ENCODE measurements at regions of chr15 and their contacts with region 1.

Region 1: DNA sequence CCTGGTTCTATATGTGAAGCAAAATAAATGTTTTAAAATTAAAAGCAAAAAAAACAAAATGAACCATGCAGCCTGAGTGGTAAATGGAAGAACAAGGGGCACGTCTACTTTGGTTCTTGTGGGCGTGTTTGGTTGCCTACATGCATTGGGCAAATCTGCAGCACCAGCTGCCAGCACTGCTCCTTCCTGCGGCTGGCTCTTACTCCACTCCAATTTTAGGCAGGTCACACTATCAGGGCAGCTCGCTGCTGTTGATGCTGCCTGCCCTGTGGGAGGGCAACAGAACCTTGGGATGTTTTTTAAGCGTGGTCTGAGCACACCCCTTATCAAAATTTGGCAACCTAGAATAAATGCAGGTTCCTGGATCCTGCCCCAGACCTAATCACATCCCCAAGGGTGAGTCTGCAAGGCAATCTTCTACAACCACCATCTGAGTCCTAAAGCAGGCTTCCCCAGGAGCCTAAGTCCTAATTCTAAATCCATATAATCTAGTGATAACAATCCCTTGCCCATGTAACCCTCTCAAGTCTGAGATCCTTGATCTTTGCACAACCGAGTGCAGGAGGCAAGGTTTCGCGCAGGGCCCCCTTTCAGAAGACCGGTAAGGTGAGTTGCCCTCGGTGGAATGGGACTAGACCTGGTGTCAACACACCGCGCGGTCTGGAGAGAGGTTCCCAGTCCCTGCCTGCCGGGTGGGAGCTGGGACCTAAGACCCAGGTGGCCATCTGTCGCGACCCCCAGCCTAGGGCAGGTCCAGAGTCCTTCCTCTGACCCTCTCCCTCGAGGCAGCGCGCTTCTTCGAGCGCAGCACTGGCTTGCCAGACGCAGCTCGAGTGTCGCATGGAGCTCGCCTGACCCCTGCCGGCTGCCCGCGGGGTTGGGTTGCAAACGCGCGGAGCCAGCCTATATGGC is 15.9 kb downstream of the IVD start:
- DNase-seq: peak; percentile 52
- ATAC-seq: peak; percentile 99
- H3K4me3 ChIP-seq: no peak overlapping the region
- H3K27ac ChIP-seq: no peak overlapping the region
- H3K4me1 ChIP-seq: no peaks in the 10 kb centered on the region
- H3K27me3 ChIP-seq: no peaks in the 10 kb centered on the region; the same call in 1 of the 2 replicates
- CTCF ChIP-seq: peak; percentile 93
- POLR2A ChIP-seq: no peak
- RAD21 ChIP-seq: peak; percentile 96

Region 2: DNA sequence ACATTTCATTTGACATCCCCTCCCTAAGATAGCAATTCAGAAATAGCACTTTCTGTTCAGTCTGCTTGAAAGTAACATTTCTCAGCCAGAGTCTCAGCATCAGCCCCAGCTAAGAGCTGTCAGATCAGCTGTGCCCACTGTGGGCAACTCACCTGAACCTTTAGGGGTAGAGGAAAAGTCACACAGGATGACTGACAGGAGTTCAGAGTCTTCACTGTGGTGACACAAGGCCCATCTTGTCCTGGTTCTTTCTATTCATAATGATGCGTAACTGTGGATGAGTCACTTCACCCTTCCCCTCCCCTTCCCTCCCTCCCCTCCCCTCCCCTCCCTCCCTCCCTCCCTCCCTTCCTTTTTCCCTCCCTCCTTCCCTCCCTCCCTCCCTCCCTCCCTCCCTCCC is 1760.8 kb before region 1 on chr15:
- CTCF ChIA-PET with region 1: no interaction called
- POLR2A ChIA-PET with region 1: interaction called, 20 read pairs
- dilution Hi-C with region 1: no loop called
- in situ Hi-C with region 1: no loop called
- intact Hi-C with region 1: no loop called
- DNase-seq: no peak
- ATAC-seq: no peak
- H3K4me3 ChIP-seq: no peak overlapping the region
- H3K27ac ChIP-seq: no peak overlapping the region
- H3K4me1 ChIP-seq: no peaks in the 10 kb centered on the region
- H3K27me3 ChIP-seq: peaks cover 42% of the 10 kb centered on the region
- CTCF ChIP-seq: no peak
- POLR2A ChIP-seq: no peak
- RAD21 ChIP-seq: no peak

Region 3: DNA sequence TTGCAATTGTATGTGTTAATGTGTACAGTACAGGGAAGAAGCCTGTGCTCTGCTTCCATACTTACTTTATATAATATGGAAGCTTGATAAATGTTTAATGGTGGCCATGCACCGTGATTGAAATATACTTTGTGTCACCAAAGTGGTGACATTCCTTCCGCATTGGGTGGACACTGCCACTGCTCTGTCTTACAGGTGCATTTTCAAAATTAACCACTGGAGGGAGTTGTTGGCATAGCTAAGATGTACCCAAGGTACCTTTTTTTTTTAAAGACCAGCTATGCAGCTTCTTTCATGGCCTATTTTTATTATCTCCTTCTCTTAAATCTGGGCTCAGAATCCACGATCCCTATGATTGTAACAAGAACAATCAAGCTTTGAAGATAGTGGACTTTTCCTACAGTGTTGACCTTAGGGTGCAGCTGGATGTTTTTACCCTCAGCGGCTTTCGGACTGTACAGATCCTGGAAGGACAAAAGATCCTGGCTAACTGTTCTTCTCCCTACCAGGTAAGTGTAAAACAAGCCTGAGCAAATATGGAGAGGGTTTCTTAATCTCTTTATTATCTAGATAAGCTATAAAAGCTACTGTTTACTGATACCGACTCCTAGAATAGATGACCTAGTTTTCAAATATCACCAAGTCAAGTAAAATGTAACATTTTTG is 204.2 kb before region 1 on chr15:
- CTCF ChIA-PET with region 1: no interaction called
- POLR2A ChIA-PET with region 1: no interaction called
- dilution Hi-C with region 1: no loop called
- in situ Hi-C with region 1: loop called (anchors 10 kb)
- intact Hi-C with region 1: no loop called
- DNase-seq: peak; percentile 70
- ATAC-seq: peak; percentile 92
- H3K4me3 ChIP-seq: no peak overlapping the region
- H3K27ac ChIP-seq: no peak overlapping the region
- H3K4me1 ChIP-seq: no peaks in the 10 kb centered on the region
- H3K27me3 ChIP-seq: no peaks in the 10 kb centered on the region
- CTCF ChIP-seq: peak; percentile 95
- POLR2A ChIP-seq: no peak
- RAD21 ChIP-seq: peak; percentile 96

Region 4: DNA sequence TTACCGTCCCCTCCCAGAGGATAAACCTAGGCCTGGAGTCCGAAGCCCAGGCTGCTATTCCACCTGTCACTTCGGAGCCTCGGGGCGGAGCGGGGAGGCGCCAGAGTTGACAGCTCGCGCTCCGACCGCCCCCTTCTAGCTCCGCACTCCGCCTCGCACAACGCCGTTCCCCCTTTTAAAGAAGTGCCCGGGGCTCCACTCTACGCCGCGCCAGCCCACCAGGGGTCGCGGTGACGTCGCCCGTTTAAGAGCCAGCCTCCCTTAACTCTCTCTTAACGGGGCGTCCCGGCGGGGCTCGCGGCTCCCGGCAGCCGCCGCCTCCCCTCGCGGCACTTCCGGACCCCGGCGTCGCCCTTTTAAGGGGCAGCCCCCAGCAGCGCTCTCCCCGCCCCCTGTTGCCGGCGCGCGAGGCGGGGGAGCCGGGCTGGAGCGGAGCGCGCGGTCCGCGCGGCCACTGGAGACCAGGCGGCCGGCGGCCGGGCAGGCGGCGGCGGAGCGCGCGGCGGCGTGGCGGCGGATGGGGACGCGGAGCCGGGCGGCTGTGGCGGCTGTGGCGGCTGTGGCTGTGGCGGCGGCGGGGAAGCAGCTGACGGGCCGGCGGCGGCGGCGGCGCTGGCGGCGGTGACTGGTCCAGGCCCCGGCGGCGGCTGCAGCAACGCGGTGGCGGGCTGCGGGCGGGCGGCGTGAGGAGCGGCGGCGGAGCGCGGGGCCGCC is 98.1 kb before region 1 on chr15 and contains the start of gene INAFM2:
- CTCF ChIA-PET with region 1: interaction called, 5 read pairs
- POLR2A ChIA-PET with region 1: no interaction called
- dilution Hi-C with region 1: no loop called
- in situ Hi-C with region 1: loop called (anchors 5 kb)
- intact Hi-C with region 1: loop called (anchors 1 kb)
- DNase-seq: peak; percentile 92
- ATAC-seq: peak; percentile 85
- H3K4me3 ChIP-seq: peak within 1 kb of the TSS; percentile 89
- H3K27ac ChIP-seq: peak within 1 kb of the TSS; percentile 74; the same call in 1 of the 2 replicates
- H3K4me1 ChIP-seq: peaks cover 24% of the 10 kb centered on the region
- H3K27me3 ChIP-seq: peaks cover 2% of the 10 kb centered on the region
- CTCF ChIP-seq: peak; percentile 74
- POLR2A ChIP-seq: peak; percentile 65
- RAD21 ChIP-seq: peak; percentile 51
- total RNA-seq, gene INAFM2: 10.4 and 13.1 TPM in 2 replicates

Region 5: DNA sequence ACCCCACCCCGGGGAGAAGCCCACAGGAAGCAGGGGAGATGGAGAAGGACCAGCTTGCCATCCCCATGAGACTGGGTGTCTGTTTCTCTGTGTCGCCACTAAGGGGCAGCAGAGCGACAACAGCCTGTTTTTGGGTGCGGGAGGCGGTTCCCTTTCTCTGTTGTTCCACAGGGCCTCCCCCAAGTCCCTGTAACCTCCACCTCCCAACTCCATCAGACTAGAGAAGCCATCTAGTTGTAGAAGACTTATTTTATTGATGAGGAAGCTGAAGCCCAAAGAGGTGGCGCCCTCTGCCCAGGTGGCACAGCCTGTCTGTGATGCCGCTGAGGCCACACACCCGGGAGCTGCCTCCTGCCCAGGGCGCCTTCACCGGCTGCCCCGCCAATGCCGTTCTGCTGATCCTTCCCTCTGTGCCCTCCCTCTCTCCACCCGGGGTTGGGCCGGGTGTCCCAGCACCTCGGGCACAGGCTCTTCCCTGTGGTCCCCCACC is 76.8 kb before region 1 on chr15:
- CTCF ChIA-PET with region 1: interaction called, 8 read pairs
- POLR2A ChIA-PET with region 1: no interaction called
- dilution Hi-C with region 1: no loop called
- in situ Hi-C with region 1: no loop called
- intact Hi-C with region 1: loop called (anchors 1 kb)
- DNase-seq: peak; percentile 69
- ATAC-seq: peak; percentile 18
- H3K4me3 ChIP-seq: no peak overlapping the region
- H3K27ac ChIP-seq: peak overlapping the region; percentile 85; the same call in 1 of the 2 replicates
- H3K4me1 ChIP-seq: peaks cover 24% of the 10 kb centered on the region
- H3K27me3 ChIP-seq: no peaks in the 10 kb centered on the region
- CTCF ChIP-seq: peak; percentile 80
- POLR2A ChIP-seq: no peak
- RAD21 ChIP-seq: peak; percentile 71

Region 6: DNA sequence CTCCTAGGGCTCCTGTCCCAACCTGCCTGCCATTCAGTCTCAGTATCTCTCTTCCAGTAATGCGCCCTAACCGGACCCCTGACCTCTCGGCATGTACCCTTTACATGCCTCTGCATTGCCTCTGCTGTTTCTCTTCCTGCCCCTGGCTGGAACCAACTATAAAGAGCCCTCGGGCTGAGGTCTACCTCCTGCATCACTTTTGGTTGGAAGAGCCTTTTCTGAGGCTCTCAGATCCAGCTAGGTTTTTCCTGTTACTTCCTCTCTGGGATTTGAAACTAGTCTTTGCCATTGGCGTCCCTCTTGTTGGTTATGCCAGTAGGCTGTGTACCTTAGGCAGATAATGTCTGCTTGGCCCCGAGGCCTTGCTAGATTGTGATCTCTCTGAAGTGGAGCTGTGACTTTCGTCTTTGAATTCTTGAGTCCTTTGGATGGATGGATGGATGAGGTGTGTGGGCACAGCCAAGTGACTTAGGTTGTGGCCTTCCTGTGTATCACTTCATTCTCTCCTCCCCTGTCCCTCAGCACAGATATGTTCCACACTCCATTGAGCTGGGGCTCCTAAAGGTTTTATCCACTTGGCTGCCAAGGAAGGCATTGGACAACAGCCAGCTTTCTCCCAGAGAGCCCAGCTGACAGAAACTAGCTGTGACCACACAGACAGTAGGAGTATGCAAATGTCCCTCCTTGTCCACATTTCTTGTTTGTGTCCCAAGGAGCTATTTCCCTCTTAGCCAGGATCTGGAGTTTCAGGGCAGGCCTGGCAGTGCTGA is 393.6 kb after region 1 on chr15:
- CTCF ChIA-PET with region 1: no interaction called
- POLR2A ChIA-PET with region 1: no interaction called
- dilution Hi-C with region 1: no loop called
- in situ Hi-C with region 1: no loop called
- intact Hi-C with region 1: no loop called
- DNase-seq: no peak
- ATAC-seq: peak; percentile 51
- H3K4me3 ChIP-seq: no peak overlapping the region
- H3K27ac ChIP-seq: no peak overlapping the region
- H3K4me1 ChIP-seq: no peaks in the 10 kb centered on the region
- H3K27me3 ChIP-seq: no peaks in the 10 kb centered on the region
- CTCF ChIP-seq: no peak
- POLR2A ChIP-seq: no peak
- RAD21 ChIP-seq: no peak

Region 7: DNA sequence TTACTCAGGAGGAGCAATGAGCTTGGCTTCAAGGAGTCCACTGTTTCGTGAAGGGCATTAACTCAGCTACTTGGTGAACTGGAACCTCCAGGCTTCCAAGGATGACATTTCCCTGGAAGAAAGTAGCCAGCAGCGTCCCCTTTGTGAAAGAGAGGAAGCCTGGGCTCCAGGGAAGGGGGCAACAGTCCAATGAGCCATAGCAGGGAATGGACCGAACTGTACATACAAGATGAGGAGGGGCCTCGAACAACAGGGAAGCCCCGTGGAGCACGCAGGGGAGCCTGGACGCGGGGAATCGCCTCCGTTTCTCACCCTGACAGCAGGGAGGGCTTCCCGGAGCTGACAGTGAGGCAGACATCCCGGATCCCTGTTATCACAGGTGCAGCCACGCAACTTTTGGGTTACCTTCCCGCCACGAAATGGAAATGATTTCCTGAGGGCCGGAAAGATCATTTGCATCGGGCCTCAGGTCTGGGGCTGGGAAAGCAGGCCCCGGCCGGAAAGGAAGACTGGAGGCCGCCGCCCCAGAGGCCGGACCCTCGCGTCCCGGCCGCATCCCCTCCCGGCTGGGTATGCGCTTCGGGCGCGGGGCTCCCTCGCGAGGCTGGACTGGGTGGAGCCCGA is 421.9 kb after region 1 on chr15:
- CTCF ChIA-PET with region 1: no interaction called
- POLR2A ChIA-PET with region 1: no interaction called
- dilution Hi-C with region 1: no loop called
- in situ Hi-C with region 1: no loop called
- intact Hi-C with region 1: no loop called
- DNase-seq: no peak
- ATAC-seq: no peak
- H3K4me3 ChIP-seq: peak overlapping the region; percentile 26; the same call in 1 of the 2 replicates
- H3K27ac ChIP-seq: no peak overlapping the region
- H3K4me1 ChIP-seq: peaks cover 5% of the 10 kb centered on the region
- H3K27me3 ChIP-seq: peaks cover 38% of the 10 kb centered on the region
- CTCF ChIP-seq: no peak
- POLR2A ChIP-seq: no peak
- RAD21 ChIP-seq: no peak